Astrocyte of the spinal cord (primary cell): ENCODE measurements at regions of chr6 and their contacts with region 1.

Region 1: GRCh38 chr6:155174576-155175211 is 89.1 kb upstream of the CLDN20 start:
- DNase-seq: peak; percentile 85
- H3K4me3 ChIP-seq: no peak overlapping the region
- CTCF ChIP-seq: peak; percentile 66

Region 2: GRCh38 chr6:154932515-154933027 is 242.1 kb before region 1 on chr6:
- in situ Hi-C with region 1: loop called (anchors 10 kb)
- DNase-seq: peak; percentile 75
- H3K4me3 ChIP-seq: no peak overlapping the region
- CTCF ChIP-seq: no peak